ENCODE measurements at regions of chr17 and their contacts with region 1.

Region 1: DNA sequence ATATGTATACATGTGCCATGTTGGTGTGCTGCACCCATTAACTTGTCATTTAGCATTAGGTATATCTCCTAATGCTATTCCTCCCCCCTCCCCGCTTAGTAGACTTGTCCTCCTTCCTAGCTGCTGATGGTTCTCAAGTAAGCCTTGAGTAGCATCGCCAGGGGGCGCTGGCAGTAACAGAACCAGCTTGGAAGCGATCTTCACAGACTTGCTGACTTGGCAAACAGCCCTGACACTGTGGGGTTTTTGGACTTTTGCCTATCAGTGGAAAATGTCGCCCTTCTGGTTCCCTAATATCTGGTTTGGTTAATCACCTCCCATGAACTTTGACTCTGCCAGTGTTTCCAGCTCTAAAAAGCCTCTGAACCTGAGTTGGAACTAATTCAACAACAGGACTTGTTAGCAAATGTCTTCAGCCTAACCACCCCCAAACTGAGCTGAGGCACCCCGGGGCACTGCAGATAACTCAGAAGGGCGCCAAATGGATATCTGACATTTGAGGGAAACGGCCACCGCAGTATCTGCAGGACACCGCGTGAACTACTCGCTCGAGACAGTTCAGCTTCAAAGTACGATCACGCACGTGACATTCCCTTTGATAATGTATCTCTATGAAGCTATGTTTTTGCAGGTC is 15.4 kb upstream of the SPATA32 start:
- DNase-seq: peak; percentile 83 to 98 (median 89)
- ATAC-seq: peak; percentile 99
- H3K4me3 ChIP-seq: no peak overlapping the region
- H3K27ac ChIP-seq: peak overlapping the region; percentile 57
- H3K4me1 ChIP-seq: peaks cover 9 to 12% of the 10 kb centered on the region in 2 experiments; a peak in 3 of 5 replicates
- H3K27me3 ChIP-seq: no peaks in the 10 kb centered on the region
- CTCF ChIP-seq: peak; percentile 87 to 92 (median 89)
- EP300 ChIP-seq: 0 out of 2 replicates have a peak, but pooled peaks have one; percentile 11
- POLR2A ChIP-seq: no peak
- RAD21 ChIP-seq: peak; percentile 95 to 98

Region 2: DNA sequence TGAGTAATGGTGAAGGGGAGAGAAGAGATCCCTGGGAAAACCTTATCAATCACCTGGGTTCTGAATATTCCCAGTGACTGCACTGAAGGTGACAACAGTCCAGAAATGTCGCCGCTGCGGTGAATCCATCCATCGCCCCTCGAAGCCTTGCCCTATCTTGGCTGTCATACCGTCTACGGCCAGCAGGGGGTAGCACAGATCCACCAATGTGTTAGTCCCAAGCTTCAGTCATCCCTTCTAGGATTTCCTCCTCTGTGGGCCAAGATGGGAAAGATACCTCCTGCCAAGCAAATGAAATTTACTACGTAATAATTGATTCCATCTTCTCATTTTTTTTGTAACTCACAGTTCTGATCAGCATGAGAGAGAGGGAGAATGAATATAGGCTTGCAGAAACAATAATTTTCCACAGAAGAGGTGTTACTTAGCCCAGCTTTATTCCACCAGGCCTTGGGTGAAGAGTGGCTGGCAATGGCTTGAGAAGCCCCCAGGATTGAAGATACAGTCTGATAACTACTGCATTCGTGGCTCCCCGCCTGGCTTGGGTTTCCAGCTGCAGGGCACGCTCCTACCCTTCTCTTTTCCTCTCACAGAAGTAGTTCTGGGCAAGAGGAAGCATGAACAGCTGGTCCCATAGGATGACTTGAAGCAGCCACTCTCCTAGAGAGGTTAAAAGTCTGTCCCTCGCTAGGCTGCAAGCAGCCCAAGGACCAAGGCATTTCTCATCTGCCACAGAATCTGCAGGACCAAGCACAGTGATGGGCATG is 58.3 kb before region 1 on chr17:
- CTCF ChIA-PET with region 1: interaction called, 5 read pairs
- POLR2A ChIA-PET with region 1: interaction called, 3 read pairs
- in situ Hi-C with region 1: no loop called
- intact Hi-C with region 1: loop called (anchors 2 kb)
- DNase-seq: peak; percentile 74 to 85 (median 77)
- ATAC-seq: peak; percentile 76
- H3K4me3 ChIP-seq: no peak overlapping the region
- H3K27ac ChIP-seq: no peak overlapping the region
- H3K4me1 ChIP-seq: peaks cover 16 to 33% of the 10 kb centered on the region in 2 experiments; a peak in 4 of 5 replicates
- H3K27me3 ChIP-seq: no peaks in the 10 kb centered on the region
- CTCF ChIP-seq: peak; percentile 92 to 96 (median 96)
- EP300 ChIP-seq: no peak
- POLR2A ChIP-seq: no peak
- RAD21 ChIP-seq: peak; percentile 92 to 98

Region 3: GRCh38 chr17:45265821-45266220 is 11.5 kb before region 1 on chr17:
- CTCF ChIA-PET with region 1: no interaction called
- POLR2A ChIA-PET with region 1: interaction called, 13 read pairs
- in situ Hi-C with region 1: no loop called
- intact Hi-C with region 1: no loop called
- DNase-seq: no peak
- ATAC-seq: no peak
- H3K4me3 ChIP-seq: no peak overlapping the region
- H3K27ac ChIP-seq: no peak overlapping the region
- H3K4me1 ChIP-seq: peaks cover 0 to 22% of the 10 kb centered on the region in 2 experiments; a peak in 1 of 5 replicates
- H3K27me3 ChIP-seq: no peaks in the 10 kb centered on the region
- CTCF ChIP-seq: no peak
- EP300 ChIP-seq: no peak
- POLR2A ChIP-seq: no peak
- RAD21 ChIP-seq: no peak

Region 4: GRCh38 chr17:45287526-45288500 is 10.5 kb after region 1 on chr17:
- CTCF ChIA-PET with region 1: interaction called, 6 read pairs
- POLR2A ChIA-PET with region 1: interaction called, 13 read pairs
- in situ Hi-C with region 1: no loop called
- intact Hi-C with region 1: no loop called
- DNase-seq: peak in 2 of 4 experiments; percentile 30 to 37
- ATAC-seq: no peak
- H3K4me3 ChIP-seq: no peak overlapping the region
- H3K27ac ChIP-seq: no peak overlapping the region
- H3K4me1 ChIP-seq: peaks cover 0 to 7% of the 10 kb centered on the region in 2 experiments; a peak in 1 of 5 replicates
- H3K27me3 ChIP-seq: no peaks in the 10 kb centered on the region
- CTCF ChIP-seq: no peak
- EP300 ChIP-seq: no peak
- POLR2A ChIP-seq: no peak
- RAD21 ChIP-seq: no peak

Region 5: DNA sequence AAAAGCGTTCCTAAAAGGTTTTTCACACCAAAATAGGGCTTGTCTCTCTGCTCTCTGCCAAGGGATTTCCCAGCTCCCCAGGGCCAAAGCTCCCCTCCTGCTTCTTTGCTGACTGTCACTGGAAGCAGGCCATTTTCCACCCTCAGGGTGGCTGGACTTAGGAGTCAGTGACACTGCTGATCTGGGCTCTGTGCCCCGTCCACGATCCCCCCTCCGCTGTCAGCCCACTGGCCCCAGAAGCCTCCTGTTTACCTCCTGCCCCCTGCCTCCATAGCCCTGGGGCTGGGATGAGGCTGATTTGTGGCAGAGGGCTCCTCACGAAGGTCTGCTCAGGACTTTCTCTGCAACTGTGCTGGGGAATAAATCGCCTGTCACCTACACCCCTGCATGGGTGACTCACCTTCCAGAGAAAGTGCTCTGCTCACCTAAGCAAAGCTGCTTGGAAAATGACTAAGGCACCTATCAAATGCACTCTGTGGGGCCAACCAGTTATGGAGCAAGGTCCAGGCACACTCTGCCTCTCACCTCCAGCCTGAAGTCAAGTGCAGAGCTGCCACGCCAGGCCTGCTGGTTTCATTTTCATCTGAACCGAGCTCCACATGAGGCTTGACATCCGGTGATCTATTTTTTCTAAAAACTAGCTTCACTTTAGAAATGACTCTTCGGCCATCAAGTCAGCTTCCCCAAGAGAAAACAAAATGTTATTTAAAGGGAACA is 34.6 kb after region 1 on chr17:
- CTCF ChIA-PET with region 1: no interaction called
- POLR2A ChIA-PET with region 1: interaction called, 4 read pairs
- in situ Hi-C with region 1: no loop called
- intact Hi-C with region 1: loop called (anchors 5 kb)
- DNase-seq: peak in 1 of 4 experiments; percentile 43
- ATAC-seq: no peak
- H3K4me3 ChIP-seq: no peak overlapping the region
- H3K27ac ChIP-seq: no peak overlapping the region
- H3K4me1 ChIP-seq: peaks cover 32 to 37% of the 10 kb centered on the region in 2 experiments; a peak in 4 of 5 replicates
- H3K27me3 ChIP-seq: no peaks in the 10 kb centered on the region
- CTCF ChIP-seq: no peak
- EP300 ChIP-seq: no peak
- POLR2A ChIP-seq: no peak
- RAD21 ChIP-seq: no peak

Region 6: GRCh38 chr17:45385331-45385997 is 108.1 kb after region 1 on chr17:
- CTCF ChIA-PET with region 1: interaction called, 77 read pairs
- POLR2A ChIA-PET with region 1: interaction called, 8 read pairs
- in situ Hi-C with region 1: loop called (anchors 5 kb)
- intact Hi-C with region 1: loop called (anchors 1 kb)
- DNase-seq: peak; percentile 85 to 92 (median 86)
- ATAC-seq: peak; percentile 99
- H3K4me3 ChIP-seq: no peak overlapping the region
- H3K27ac ChIP-seq: no peak overlapping the region
- H3K4me1 ChIP-seq: peaks cover 21 to 22% of the 10 kb centered on the region in 2 experiments
- H3K27me3 ChIP-seq: peaks cover 0 to 14% of the 10 kb centered on the region in 2 experiments; a peak in 3 of 5 replicates
- CTCF ChIP-seq: peak; percentile 96 to 99 (median 98)
- EP300 ChIP-seq: 0 out of 2 replicates have a peak, but pooled peaks have one; percentile 8
- POLR2A ChIP-seq: no peak
- RAD21 ChIP-seq: peak; percentile 99

Region 7: DNA sequence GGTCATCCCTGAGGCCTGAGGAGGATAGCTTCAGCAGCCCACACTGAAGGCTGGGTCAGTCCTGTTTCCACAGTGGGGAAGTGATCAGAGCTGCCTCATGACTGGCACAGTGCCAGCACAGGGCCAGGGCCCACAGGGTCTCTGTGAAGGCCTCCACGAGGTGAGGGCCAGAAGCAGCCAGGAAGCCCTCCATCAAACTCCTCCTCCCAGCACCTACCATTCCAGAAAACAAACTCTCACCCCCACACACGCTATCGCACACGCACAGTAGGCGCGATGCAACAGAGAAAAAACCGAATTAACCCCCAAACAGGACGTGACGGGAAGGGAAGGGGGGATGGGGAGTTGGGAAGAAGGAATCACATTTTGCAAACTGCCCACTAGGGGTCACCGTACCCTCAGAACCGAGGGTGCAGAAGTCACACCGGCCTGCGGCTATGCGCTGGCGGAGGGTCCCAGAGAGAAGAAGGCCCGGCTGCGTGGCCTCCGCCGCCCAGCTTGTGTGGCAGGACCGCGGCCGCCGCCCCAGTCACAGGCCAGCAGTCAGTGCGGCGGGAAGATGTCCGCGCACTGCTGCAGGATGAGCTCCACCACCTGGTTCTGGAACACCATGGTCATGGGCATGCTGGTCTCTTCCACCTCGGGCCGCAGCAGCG is 117.7 kb after region 1 on chr17:
- CTCF ChIA-PET with region 1: interaction called, 10 read pairs
- POLR2A ChIA-PET with region 1: interaction called, 5 read pairs
- in situ Hi-C with region 1: no loop called
- intact Hi-C with region 1: no loop called
- DNase-seq: peak; percentile 93 to 95 (median 94)
- ATAC-seq: peak; percentile 94
- H3K4me3 ChIP-seq: no peak overlapping the region
- H3K27ac ChIP-seq: peak overlapping the region; percentile 61
- H3K4me1 ChIP-seq: peaks cover 14 to 29% of the 10 kb centered on the region in 2 experiments; a peak in 4 of 5 replicates
- H3K27me3 ChIP-seq: 0 out of 5 replicates have a peak, but pooled peaks cover 0 to 4% of the 10 kb centered on the region in 2 experiments
- CTCF ChIP-seq: peak; percentile 87 to 90 (median 88)
- EP300 ChIP-seq: peak; percentile 87
- POLR2A ChIP-seq: no peak
- RAD21 ChIP-seq: peak; percentile 69 to 84

Measured in K562 (cell line).